ENCODE measurements at regions of chr2 and their contacts with region 1.

Region 1: GRCh38 chr2:219689676-219690628 is 62.5 kb downstream of the SLC4A3 start:
- DNase-seq: no peak
- H3K4me3 ChIP-seq: no peak overlapping the region
- CTCF ChIP-seq: peak; percentile 63

Region 2: GRCh38 chr2:219543601-219544358 is 146.2 kb before region 1 on chr2 and contains the starts of genes CHPF and TMEM198:
- CTCF ChIA-PET with region 1: interaction called, 147 read pairs
- POLR2A ChIA-PET with region 1: interaction called, 9 read pairs
- DNase-seq: peak; percentile 87
- H3K4me3 ChIP-seq: peak within 1 kb of the TSS; percentile 80
- CTCF ChIP-seq: no peak

Region 3: GRCh38 chr2:219565130-219566080 is 124.5 kb before region 1 on chr2:
- CTCF ChIA-PET with region 1: interaction called, 23 read pairs
- POLR2A ChIA-PET with region 1: interaction called, 11 read pairs
- DNase-seq: no peak
- H3K4me3 ChIP-seq: no peak overlapping the region
- CTCF ChIP-seq: no peak

Region 4: GRCh38 chr2:219619235-219619634 is 70.7 kb before region 1 on chr2:
- CTCF ChIA-PET with region 1: interaction called, 19 read pairs
- POLR2A ChIA-PET with region 1: no interaction called
- DNase-seq: no peak
- H3K4me3 ChIP-seq: no peak overlapping the region
- CTCF ChIP-seq: no peak

Region 5: GRCh38 chr2:219675221-219675620 is 14.7 kb before region 1 on chr2:
- CTCF ChIA-PET with region 1: interaction called, 22 read pairs
- POLR2A ChIA-PET with region 1: no interaction called
- DNase-seq: no peak
- H3K4me3 ChIP-seq: no peak overlapping the region
- CTCF ChIP-seq: no peak

Measured in AG04449 (cell line).